CD4-positive, alpha-beta T cell (primary cell): ENCODE measurements at regions of chrX and their contacts with region 1.

Region 1: GRCh38 chrX:150898343-150899190 is at the start of gene CD99L2:
- DNase-seq: peak; percentile 82 to 94 (median 88)
- ATAC-seq: peak; percentile 91
- H3K4me3 ChIP-seq: peak within 1 kb of the TSS; percentile 79
- H3K4me3 Mint-ChIP-seq: peak within 1 kb of the TSS; percentile 96
- H3K27ac ChIP-seq: no peak within 1 kb of the TSS
- H3K27ac Mint-ChIP-seq: peak within 1 kb of the TSS; percentile 76
- H3K4me1 ChIP-seq: peaks cover 12% of the 10 kb centered on the region
- H3K4me1 Mint-ChIP-seq: peaks cover 15% of the 10 kb centered on the region
- H3K27me3 ChIP-seq: no peaks in the 10 kb centered on the region
- H3K27me3 Mint-ChIP-seq: no peaks in the 10 kb centered on the region
- CTCF ChIP-seq: no peak
- total RNA-seq, gene CD99L2: 5.3 to 6.5 TPM

Region 2: GRCh38 chrX:150372280-150372679 is 526.3 kb before region 1 on chrX:
- CTCF ChIA-PET with region 1: no interaction called
- POLR2A ChIA-PET with region 1: no interaction called
- intact Hi-C with region 1: loop called in 1 of 2 experiments (anchors 10 kb)
- DNase-seq: no peak
- ATAC-seq: no peak
- H3K4me3 ChIP-seq: no peak overlapping the region
- H3K4me3 Mint-ChIP-seq: no peak overlapping the region
- H3K27ac ChIP-seq: no peak overlapping the region
- H3K27ac Mint-ChIP-seq: no peak overlapping the region
- H3K4me1 ChIP-seq: no peaks in the 10 kb centered on the region
- H3K4me1 Mint-ChIP-seq: no peaks in the 10 kb centered on the region
- H3K27me3 ChIP-seq: no peaks in the 10 kb centered on the region
- H3K27me3 Mint-ChIP-seq: no peaks in the 10 kb centered on the region
- CTCF ChIP-seq: no peak

Region 3: GRCh38 chrX:150982788-150983520 is 84.4 kb after region 1 on chrX and contains the start of gene HMGB3:
- CTCF ChIA-PET with region 1: no interaction called
- POLR2A ChIA-PET with region 1: no interaction called
- intact Hi-C with region 1: loop called (anchors 2 to 10 kb)
- DNase-seq: peak; percentile 44 to 89 (median 68)
- ATAC-seq: peak; percentile 98
- H3K4me3 ChIP-seq: peak within 1 kb of the TSS; percentile 59
- H3K4me3 Mint-ChIP-seq: peak within 1 kb of the TSS; percentile 87
- H3K27ac ChIP-seq: no peak within 1 kb of the TSS
- H3K27ac Mint-ChIP-seq: no peak within 1 kb of the TSS
- H3K4me1 ChIP-seq: peaks cover 14% of the 10 kb centered on the region
- H3K4me1 Mint-ChIP-seq: peaks cover 7% of the 10 kb centered on the region
- H3K27me3 ChIP-seq: peaks cover 0 to 9% of the 10 kb centered on the region in 2 experiments
- H3K27me3 Mint-ChIP-seq: peaks cover 17% of the 10 kb centered on the region
- CTCF ChIP-seq: no peak
- total RNA-seq, gene HMGB3: 4.0 to 5.4 TPM

Region 4: DNA sequence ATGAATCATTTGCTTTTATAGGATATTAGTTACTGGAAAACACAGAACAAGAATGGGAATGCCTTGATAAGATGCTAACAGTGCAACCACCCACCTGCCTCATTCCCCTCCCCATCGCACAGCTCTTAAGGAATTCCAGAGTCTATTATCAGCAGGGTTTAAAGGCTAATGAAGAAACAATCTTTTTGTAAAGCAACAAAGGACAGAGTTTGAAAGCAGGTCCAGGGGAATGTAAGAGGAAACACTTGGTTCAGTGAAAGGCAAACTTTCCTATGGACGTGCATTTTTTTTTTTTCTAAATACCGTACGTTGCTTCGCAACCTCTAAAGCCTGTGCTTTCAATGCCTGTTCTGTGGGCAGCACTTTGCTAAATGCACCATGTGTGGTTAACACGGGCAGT is 370.3 kb after region 1 on chrX:
- CTCF ChIA-PET with region 1: no interaction called
- POLR2A ChIA-PET with region 1: no interaction called
- intact Hi-C with region 1: no loop called
- DNase-seq: no peak
- ATAC-seq: no peak
- H3K4me3 ChIP-seq: no peak overlapping the region
- H3K4me3 Mint-ChIP-seq: no peak overlapping the region
- H3K27ac ChIP-seq: no peak overlapping the region
- H3K27ac Mint-ChIP-seq: no peak overlapping the region
- H3K4me1 ChIP-seq: no peaks in the 10 kb centered on the region
- H3K4me1 Mint-ChIP-seq: no peaks in the 10 kb centered on the region
- H3K27me3 ChIP-seq: no peaks in the 10 kb centered on the region
- H3K27me3 Mint-ChIP-seq: no peaks in the 10 kb centered on the region
- CTCF ChIP-seq: no peak